HepG2 (cell line): ENCODE measurements at regions of chr17 and their contacts with region 1.

Region 1: GRCh38 chr17:45801421-45801820 is 17.3 kb downstream of the CRHR1 start:
- DNase-seq: no peak
- ATAC-seq: no peak
- H3K4me3 ChIP-seq: no peak overlapping the region
- H3K27ac ChIP-seq: no peak overlapping the region
- H3K4me1 ChIP-seq: no peaks in the 10 kb centered on the region
- H3K27me3 ChIP-seq: peaks cover 18 to 74% of the 10 kb centered on the region in 2 experiments; a peak in 4 of 5 replicates
- CTCF ChIP-seq: no peak
- EP300 ChIP-seq: no peak
- POLR2A ChIP-seq: no peak
- RAD21 ChIP-seq: no peak

Region 2: DNA sequence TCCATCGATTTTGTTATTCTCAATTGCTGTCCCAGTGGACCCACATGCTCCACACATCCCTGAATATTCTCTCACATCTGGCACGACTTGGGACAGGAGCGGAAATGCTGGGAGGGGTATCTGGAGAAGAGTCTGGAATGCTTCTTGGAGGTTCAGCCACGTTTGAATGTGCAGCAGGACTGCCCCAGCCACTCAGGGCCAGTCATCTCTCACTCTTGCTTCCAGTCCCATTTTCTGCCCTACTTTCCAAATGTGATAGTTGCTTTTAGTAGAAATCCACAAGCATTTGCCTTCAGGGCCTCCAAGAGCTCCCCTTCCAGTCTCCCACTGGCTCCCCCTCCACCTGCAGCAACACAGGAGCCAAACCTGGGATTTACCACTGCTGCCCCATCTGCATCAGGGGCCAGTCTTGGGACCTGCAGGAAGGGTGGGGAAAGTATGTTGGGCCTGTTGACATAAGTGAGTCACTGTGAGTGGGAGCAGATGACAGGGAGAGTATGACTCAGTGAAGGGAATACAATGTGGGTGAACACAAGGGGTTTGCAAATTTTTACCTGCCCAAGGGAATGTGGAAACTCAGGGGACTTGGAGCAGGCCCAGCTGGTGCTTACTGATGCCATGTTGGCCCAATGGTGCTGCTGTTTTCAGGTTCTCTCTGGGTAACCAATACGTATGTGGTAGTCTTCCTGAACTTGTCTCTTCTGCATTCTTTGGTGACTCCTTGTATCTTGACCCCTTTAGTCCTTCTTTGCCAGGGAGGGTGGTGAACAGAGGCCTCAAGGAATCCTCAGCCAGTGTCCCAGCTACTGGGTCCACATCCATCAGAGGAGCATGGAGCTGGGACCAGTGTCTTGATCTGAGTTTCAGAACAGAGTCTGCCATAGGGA is 96.1 kb before region 1 on chr17:
- CTCF ChIA-PET with region 1: no interaction called
- POLR2A ChIA-PET with region 1: no interaction called
- in situ Hi-C with region 1: no loop called
- intact Hi-C with region 1: no loop called
- DNase-seq: peak; percentile 77
- ATAC-seq: peak; percentile 86
- H3K4me3 ChIP-seq: no peak overlapping the region
- H3K27ac ChIP-seq: no peak overlapping the region
- H3K4me1 ChIP-seq: no peaks in the 10 kb centered on the region
- H3K27me3 ChIP-seq: peaks cover 7 to 45% of the 10 kb centered on the region in 2 experiments; a peak in 4 of 5 replicates
- CTCF ChIP-seq: no peak
- EP300 ChIP-seq: no peak
- POLR2A ChIP-seq: no peak
- RAD21 ChIP-seq: no peak

Region 3: DNA sequence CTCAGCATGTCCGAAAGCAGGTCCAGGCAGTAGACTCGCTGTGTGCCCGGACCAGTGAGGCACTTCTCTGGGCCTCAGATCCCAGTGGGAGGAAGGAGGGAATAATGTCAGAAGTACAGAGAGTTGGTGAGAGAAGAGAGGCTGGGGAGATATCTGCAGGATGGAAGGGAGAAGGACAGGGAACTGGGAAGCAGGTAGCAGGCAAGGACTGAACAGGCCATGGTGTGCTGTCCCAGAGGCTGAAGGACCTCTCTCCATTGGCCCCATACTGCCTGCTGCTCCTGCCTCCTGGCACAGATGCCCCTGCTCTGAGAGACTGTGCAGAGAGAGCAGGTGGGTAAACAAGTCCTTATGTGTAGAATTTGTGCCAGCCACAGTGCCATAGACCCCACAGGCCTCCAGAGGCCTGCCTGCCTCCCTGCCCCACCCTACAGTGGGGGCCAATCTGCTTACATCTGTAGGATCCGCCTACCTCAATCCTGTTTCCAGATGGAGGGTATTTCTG is 51.5 kb before region 1 on chr17:
- CTCF ChIA-PET with region 1: no interaction called
- POLR2A ChIA-PET with region 1: no interaction called
- in situ Hi-C with region 1: loop called (anchors 5 kb)
- intact Hi-C with region 1: no loop called
- DNase-seq: no peak
- ATAC-seq: no peak
- H3K4me3 ChIP-seq: no peak overlapping the region
- H3K27ac ChIP-seq: no peak overlapping the region
- H3K4me1 ChIP-seq: no peaks in the 10 kb centered on the region
- H3K27me3 ChIP-seq: peaks cover 7 to 65% of the 10 kb centered on the region in 2 experiments
- CTCF ChIP-seq: no peak
- EP300 ChIP-seq: no peak
- POLR2A ChIP-seq: no peak
- RAD21 ChIP-seq: no peak

Region 4: DNA sequence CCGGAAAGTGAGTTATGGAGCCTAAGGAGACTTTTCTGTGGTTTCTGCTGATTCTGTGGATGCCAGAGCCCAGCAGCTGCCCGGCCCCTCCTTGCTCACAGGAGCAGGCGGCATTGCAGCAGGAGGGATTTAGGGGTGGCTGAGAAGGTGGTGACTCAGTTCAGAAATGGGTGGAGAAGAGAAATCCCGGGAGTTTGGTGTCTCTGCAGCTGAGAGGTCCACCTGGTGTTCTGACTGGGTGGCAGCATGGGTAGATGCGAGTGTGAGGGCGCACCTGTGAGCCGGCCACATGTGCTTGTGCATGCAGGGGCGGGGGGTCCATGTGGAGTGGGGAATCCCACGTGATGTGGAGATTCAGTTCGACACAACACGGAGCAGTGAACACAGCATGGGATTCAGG is 27.2 kb after region 1 on chr17:
- CTCF ChIA-PET with region 1: no interaction called
- POLR2A ChIA-PET with region 1: no interaction called
- in situ Hi-C with region 1: no loop called
- intact Hi-C with region 1: no loop called
- DNase-seq: no peak
- ATAC-seq: no peak
- H3K4me3 ChIP-seq: no peak overlapping the region
- H3K27ac ChIP-seq: no peak overlapping the region
- H3K4me1 ChIP-seq: no peaks in the 10 kb centered on the region
- H3K27me3 ChIP-seq: peaks cover 30 to 86% of the 10 kb centered on the region in 2 experiments
- CTCF ChIP-seq: no peak
- EP300 ChIP-seq: no peak
- POLR2A ChIP-seq: no peak
- RAD21 ChIP-seq: no peak